GM10248 (cell line): ENCODE measurements at regions of chr3 and their contacts with region 1.

Region 1: GRCh38 chr3:13452490-13453335 is 27.4 kb upstream of the HDAC11 start:
- DNase-seq: peak; percentile 60
- CTCF ChIP-seq: peak; percentile 61

Region 2: DNA sequence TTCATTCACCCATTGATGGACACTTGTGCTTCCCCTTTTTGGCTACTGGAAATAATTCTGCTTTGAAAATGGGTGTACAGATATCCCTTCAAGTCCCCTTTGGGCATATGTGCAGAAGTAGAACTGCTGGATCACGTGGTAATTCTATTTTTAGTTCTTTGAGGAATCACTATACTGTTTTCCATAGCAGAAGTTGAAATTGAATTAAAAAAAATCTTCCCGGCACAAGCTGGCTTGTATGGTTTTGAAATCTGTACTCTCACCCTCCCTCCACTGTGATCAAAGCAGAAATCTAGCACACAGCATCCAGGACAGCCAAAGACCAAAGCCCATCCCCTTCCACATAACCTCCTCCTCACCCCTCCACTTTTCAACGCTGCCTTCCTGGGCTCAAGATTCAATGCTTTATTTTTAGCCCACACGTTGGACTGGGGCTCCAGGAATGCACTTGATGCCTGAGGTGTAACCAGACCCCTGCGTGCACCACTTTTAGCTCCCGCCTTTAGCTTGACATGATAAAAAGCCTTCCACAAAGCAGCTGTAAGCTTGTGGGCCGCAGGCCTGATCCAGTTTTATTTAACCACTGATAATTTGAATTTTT is 723.6 kb before region 1 on chr3:
- CTCF ChIA-PET with region 1: no interaction called
- POLR2A ChIA-PET with region 1: no interaction called
- DNase-seq: no peak
- CTCF ChIP-seq: no peak

Region 3: GRCh38 chr3:13083898-13084297 is 368.8 kb before region 1 on chr3:
- CTCF ChIA-PET with region 1: interaction called, 15 read pairs
- POLR2A ChIA-PET with region 1: no interaction called
- DNase-seq: peak; percentile 60
- CTCF ChIP-seq: no peak

Region 4: DNA sequence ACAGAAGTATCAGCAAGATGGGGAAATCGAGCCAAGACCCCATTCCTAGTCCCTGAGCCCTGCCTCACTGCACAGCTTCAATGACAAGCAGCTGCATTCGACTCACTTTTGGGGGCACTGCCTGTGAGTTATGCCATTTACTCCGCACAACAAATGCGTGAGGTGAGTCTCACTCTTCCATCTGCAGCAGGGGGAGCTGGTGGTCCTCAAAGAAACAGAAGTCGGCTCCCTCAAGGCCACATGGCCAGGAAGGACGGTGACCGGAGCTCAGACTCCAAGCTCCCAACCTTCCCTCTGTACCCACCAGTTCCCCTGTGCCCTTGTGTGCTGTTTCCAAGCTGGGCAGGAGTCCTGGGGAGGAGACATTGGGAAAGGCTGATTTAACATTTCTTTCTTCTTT is 251.8 kb before region 1 on chr3:
- CTCF ChIA-PET with region 1: interaction called, 15 read pairs
- POLR2A ChIA-PET with region 1: no interaction called
- DNase-seq: no peak
- CTCF ChIP-seq: peak; percentile 15

Region 5: DNA sequence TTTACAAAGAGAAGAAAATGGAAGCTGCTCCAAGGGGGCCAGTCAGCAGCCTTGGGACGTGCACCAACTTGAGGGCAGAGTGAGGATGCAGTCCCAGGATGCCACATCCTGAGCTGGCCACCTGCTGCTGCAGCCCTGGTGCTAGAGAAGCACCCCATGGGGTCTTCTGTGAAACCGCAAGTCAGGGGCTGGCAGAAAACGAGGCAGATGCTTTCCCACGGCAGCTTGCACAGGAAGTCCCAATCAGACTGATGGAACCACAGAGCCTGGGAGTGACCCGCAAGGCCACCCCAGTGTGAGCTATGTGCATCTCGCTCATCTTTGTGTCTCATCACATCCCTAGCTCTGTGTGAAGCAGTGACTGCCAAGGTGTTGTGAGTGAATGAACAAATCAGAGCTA is 109.1 kb before region 1 on chr3:
- CTCF ChIA-PET with region 1: interaction called, 11 read pairs
- POLR2A ChIA-PET with region 1: no interaction called
- DNase-seq: no peak
- CTCF ChIP-seq: no peak

Region 6: DNA sequence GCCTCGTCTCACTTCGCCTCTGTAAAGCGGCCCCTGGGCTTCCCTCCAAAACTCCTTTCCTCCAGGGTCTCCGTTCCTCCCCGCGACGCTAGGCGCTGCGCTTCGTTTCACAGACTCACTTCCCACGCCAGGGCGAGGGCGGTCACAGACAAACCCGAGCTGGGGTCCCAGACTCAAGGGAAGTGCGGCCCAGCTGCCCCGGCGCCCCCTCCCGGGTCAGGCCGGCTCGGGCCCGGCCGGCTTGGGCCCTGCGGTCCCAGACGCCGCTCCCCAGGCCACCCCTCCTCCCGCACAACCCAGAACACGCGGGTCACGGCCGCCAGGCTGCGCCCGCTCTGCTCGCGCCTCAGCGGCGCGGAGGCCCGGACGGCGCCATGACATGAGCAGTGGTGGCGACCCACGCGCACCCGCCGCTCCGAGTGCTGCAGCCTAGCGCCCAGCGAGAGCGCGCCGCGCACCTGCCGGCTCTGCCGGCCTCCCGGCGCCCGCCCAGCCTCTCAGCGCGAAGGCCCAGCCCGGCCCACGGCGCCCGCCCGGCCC is 33.1 kb before region 1 on chr3:
- CTCF ChIA-PET with region 1: interaction called, 35 read pairs
- POLR2A ChIA-PET with region 1: interaction called, 5 read pairs
- DNase-seq: peak; percentile 69
- CTCF ChIP-seq: peak; percentile 13

Region 7: DNA sequence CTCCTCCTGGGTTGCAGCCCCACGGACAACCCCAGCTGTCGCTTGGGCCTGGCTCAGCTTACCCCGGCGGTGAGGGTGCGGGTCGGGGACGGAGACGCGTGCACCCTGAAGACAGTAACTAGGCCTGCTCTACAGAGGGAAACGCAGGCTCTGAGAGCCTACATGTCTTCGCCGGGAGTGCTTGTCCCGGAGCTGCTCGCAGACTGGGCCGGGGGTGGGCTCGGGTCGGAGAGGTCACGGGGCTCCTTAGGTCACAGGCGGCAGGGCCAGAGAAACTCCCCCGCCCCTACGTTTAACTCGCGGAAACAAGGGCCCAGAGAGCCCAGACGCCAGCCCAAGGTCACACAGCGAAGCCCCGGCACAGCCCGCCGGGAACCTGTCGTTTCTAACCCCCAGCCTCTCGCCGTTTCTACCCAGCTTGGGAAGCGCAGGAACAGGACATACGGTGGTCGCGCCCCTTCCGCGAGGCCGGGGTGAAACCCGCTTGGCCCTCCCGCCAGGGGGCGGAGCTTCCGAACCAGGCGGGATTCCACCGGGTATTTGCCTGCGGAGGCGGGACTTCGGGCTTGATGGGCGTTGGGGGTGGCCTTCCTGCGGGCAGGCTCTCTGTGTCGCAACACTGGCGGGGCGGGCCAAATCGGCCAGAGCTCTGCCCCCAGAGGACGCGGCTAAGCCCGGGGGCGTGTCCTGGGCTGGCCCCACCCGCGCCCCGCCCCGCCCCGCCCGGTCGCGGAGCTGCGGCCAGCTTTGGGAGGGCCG is 27.0 kb after region 1 on chr3 and contains the start of gene HDAC11:
- CTCF ChIA-PET with region 1: interaction called, 14 read pairs
- POLR2A ChIA-PET with region 1: interaction called, 6 read pairs
- DNase-seq: peak; percentile 100
- CTCF ChIP-seq: peak; percentile 6